ENCODE measurements at regions of chr16 and their contacts with region 1.

Region 1: DNA sequence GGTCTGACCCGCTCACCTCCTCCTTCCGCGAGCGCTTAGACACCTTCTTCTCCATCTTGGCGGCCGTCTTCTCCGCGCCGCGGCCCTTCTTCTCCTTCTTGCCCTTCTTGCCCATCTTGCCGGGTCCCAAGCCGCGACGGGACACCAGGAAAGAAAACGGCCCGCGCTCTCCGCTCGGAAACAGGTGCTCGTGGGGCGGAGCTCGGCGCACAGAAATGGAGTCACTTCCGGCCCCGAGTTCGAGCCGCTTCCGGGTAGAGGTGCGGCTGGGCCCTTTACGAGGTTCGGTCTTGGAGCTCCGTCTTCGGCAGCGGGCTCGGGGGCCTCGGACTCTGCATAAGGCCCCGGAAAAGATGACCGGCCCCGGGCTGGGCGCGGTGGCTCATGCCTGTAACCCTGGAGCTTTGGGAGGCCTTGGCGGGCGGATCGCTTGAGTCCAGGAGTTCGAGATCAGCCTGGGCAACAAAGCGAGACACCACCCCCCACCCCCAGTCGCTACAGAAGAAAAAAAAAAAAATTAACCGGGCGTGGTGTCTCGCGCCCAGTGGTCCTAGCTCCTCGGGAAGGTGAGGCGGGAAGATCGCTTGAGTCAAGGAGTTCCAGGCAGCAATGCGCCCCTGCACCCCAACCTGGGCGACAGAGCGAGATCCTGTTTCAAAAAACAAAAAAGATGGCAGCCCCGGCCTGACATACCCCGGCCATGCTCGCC is at the start of gene KLHDC4:
- DNase-seq: peak; percentile 49 to 95
- H3K4me3 ChIP-seq: peak within 1 kb of the TSS; percentile 90 to 97 (median 92)
- H3K27ac ChIP-seq: peak within 1 kb of the TSS; percentile 48
- H3K4me1 ChIP-seq: peaks cover 0 to 4% (median 2%) of the 10 kb centered on the region in 4 experiments; a peak in 3 of 7 replicates
- H3K27me3 ChIP-seq: no peaks in the 10 kb centered on the region
- CTCF ChIP-seq: no peak
- EP300 ChIP-seq: no peak
- POLR2A ChIP-seq: peak; percentile 70 to 88
- RAD21 ChIP-seq: no peak
- total RNA-seq, gene KLHDC4: 55.6 and 63.9 TPM in 2 replicates

Region 2: GRCh38 chr16:87587636-87588035 is 178.3 kb before region 1 on chr16:
- CTCF ChIA-PET with region 1: interaction called, 17 read pairs
- POLR2A ChIA-PET with region 1: no interaction called
- DNase-seq: no peak
- H3K4me3 ChIP-seq: no peak overlapping the region
- H3K27ac ChIP-seq: no peak overlapping the region
- H3K4me1 ChIP-seq: peaks cover 3 to 12% (median 8%) of the 10 kb centered on the region in 4 experiments
- H3K27me3 ChIP-seq: no peaks in the 10 kb centered on the region
- CTCF ChIP-seq: no peak
- EP300 ChIP-seq: no peak
- POLR2A ChIP-seq: no peak
- RAD21 ChIP-seq: no peak

Region 3: DNA sequence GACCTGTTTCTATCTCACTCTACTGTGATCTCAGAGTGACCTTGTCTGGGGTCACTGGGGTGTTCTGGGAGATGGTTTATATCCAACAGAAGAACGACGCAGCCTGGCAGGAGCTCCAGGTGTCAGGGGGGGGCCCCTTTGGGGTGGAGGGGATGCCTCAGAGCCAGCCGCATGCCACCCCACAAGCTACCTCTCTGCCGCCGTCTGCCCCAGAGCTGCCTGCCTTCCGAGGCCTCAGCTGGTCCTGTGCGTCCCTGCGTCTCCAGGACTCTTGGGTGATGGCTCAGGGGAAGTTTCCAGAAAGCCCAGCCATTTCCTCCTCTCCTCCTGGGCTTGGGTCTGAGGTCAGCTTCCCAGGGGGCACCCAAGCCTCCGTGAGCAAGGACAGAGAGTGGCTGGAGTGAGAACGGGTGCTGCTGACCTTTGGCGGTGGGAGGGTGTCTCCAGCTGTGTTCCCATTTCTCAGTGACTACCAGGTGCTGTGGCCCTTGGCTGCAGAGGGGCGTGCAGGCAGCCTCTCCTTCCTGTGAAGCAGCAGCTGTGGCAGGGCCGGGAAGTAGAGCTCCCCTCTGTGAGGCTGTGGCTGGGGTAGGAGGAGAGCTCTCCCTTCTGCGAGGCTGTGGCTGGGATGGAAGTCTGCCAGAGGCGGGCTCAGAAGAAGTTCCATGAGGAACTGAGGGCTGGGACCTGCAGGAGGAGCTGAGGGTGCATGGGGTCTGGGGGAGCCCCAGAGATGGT is 143.8 kb before region 1 on chr16:
- CTCF ChIA-PET with region 1: no interaction called
- POLR2A ChIA-PET with region 1: no interaction called
- DNase-seq: no peak
- H3K4me3 ChIP-seq: no peak overlapping the region
- H3K27ac ChIP-seq: no peak overlapping the region; the same call in 1 of the 2 replicates
- H3K4me1 ChIP-seq: peaks cover 0 to 20% (median 3%) of the 10 kb centered on the region in 4 experiments; a peak in 6 of 7 replicates
- H3K27me3 ChIP-seq: no peaks in the 10 kb centered on the region
- CTCF ChIP-seq: no peak
- EP300 ChIP-seq: no peak
- POLR2A ChIP-seq: no peak
- RAD21 ChIP-seq: no peak

Region 4: GRCh38 chr16:87754535-87754934 is 11.4 kb before region 1 on chr16:
- CTCF ChIA-PET with region 1: interaction called, 18 read pairs
- POLR2A ChIA-PET with region 1: interaction called, 14 read pairs
- DNase-seq: no peak
- H3K4me3 ChIP-seq: no peak overlapping the region
- H3K27ac ChIP-seq: no peak overlapping the region
- H3K4me1 ChIP-seq: no peaks in the 10 kb centered on the region
- H3K27me3 ChIP-seq: no peaks in the 10 kb centered on the region; a peak in 1 of 7 replicates
- CTCF ChIP-seq: no peak
- EP300 ChIP-seq: no peak
- POLR2A ChIP-seq: no peak
- RAD21 ChIP-seq: no peak

Region 5: DNA sequence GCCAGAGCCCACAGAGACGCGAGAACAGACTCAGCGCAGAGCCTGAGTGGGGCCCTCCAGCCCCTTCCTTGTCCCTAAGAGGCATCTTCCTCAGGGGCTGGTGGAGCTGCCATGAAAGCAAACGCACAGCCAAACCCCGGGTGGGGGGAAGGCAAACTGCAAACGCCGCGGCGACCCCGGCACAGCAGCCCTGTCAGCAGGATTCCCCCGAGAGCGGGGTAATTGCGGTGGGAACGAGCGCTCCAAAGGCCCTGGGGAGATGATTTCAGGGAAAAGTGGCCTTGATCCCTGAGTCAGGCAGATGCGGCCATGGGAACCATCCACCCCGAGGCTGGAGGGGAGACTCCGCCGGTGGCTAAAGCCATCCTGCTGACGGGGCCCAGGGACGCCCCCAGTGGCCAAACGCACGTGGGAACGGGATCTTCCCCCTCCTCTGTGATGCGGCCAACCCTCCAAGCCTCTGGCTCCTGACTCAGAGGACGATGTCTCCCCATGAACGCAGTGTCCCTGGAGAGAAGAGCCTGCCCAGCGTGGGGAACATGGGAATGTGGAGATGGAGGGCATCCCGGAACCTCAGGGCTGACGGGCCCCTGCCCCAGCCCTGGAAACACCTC is 78.3 kb after region 1 on chr16:
- CTCF ChIA-PET with region 1: interaction called, 16 read pairs
- POLR2A ChIA-PET with region 1: no interaction called
- DNase-seq: peak in 1 of 2 experiments; percentile 75
- H3K4me3 ChIP-seq: no peak overlapping the region
- H3K27ac ChIP-seq: no peak overlapping the region
- H3K4me1 ChIP-seq: peaks cover 0 to 6% (median 0%) of the 10 kb centered on the region in 4 experiments; a peak in 1 of 7 replicates
- H3K27me3 ChIP-seq: no peaks in the 10 kb centered on the region
- CTCF ChIP-seq: peak; percentile 44 to 80 (median 70)
- EP300 ChIP-seq: no peak
- POLR2A ChIP-seq: no peak
- RAD21 ChIP-seq: peak; percentile 37 to 53

Region 6: DNA sequence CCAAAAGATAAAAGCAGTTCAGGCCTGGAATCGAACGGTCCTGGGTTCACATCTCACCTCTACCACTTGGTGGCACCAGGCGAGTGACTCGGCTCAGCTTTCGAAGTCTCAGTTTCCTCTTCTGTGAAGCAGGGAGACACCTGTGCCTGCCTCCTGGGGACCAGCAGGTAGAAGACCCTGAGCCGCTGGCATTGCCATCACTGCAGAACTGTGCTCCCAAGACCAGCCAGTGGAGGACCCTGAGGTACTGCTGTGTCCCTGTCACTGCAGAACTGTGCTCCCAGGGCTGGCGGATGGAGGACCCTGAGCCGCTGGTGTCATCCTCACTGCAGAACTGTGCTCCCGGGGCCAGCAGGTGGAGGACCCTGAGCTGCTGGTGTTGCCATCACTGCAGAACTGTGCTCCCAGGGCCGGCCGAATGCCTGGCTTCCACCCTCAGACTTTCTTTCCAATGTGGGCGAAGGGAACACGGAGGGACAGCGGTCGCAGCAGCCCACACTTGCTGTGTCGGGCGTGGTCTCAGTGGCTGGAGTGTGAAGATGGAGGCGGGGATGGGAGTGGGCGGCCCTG is 112.1 kb after region 1 on chr16:
- CTCF ChIA-PET with region 1: interaction called, 17 read pairs
- POLR2A ChIA-PET with region 1: interaction called, 4 read pairs
- DNase-seq: no peak
- H3K4me3 ChIP-seq: no peak overlapping the region
- H3K27ac ChIP-seq: no peak overlapping the region
- H3K4me1 ChIP-seq: peaks cover 3 to 26% (median 13%) of the 10 kb centered on the region in 4 experiments
- H3K27me3 ChIP-seq: no peaks in the 10 kb centered on the region; a peak in 1 of 7 replicates
- CTCF ChIP-seq: peak; percentile 12 to 55 (median 52); a peak in 3 of 4 replicates
- EP300 ChIP-seq: no peak
- POLR2A ChIP-seq: no peak
- RAD21 ChIP-seq: peak; percentile 8 to 40; a peak in 2 of 4 replicates